ENCODE measurements at regions of chr7 and their contacts with region 1.

Region 1: GRCh38 chr7:97027427-97028234 is 3.0 kb upstream of the DLX5 start:
- DNase-seq: peak; percentile 49 to 83 (median 58)
- ATAC-seq: peak; percentile 71
- H3K4me3 ChIP-seq: peak overlapping the region; percentile 47
- H3K4me3 Mint-ChIP-seq: peak overlapping the region; percentile 85
- H3K27ac ChIP-seq: no peak overlapping the region
- H3K27ac Mint-ChIP-seq: no peak overlapping the region
- H3K4me1 ChIP-seq: peaks cover 33% of the 10 kb centered on the region
- H3K4me1 Mint-ChIP-seq: peaks cover 47% of the 10 kb centered on the region
- H3K27me3 ChIP-seq: peaks cover 49 to 65% of the 10 kb centered on the region in 2 experiments
- H3K27me3 Mint-ChIP-seq: peaks cover 89% of the 10 kb centered on the region
- CTCF ChIP-seq: peak; percentile 70

Region 2: DNA sequence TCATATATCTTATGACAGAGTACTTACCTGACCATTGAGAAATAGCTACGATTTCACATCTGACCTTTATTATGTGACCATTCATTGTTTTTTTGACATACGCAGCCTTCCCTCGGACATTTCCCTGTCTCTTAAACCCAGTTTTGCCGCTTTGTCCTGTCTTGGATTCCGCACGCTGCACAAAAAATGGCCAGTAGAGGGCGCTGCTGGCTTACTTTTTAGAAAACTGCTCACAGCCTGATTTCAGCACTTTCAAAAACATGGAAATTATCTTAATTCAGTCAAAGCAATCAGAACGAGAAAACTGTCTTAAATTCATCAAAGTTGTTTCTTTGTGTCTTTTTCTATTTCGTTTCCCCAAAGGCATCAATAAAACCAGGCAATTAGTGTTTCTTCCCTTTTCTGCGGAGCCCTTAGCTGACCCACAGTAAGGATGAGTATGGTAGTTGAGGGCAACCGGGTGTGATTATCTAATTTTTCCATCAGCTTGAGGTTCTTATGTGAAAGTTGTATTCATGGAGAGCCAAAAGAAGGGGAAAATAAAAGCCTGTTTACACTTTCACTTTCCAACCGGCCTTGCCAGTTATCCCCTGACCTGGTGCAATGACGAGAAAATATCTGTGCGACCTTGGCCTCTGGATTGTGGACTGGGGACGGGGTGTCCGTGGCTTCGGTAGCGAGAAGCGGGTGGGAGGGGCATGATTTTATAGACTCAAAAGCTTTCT is 1110.9 kb before region 1 on chr7:
- CTCF ChIA-PET with region 1: interaction called, 17 read pairs
- POLR2A ChIA-PET with region 1: no interaction called
- intact Hi-C with region 1: loop called (anchors 1 to 2 kb)
- DNase-seq: peak; percentile 50 to 79 (median 66)
- ATAC-seq: no peak
- H3K4me3 ChIP-seq: no peak overlapping the region
- H3K4me3 Mint-ChIP-seq: no peak overlapping the region
- H3K27ac ChIP-seq: no peak overlapping the region
- H3K27ac Mint-ChIP-seq: no peak overlapping the region
- H3K4me1 ChIP-seq: no peaks in the 10 kb centered on the region
- H3K4me1 Mint-ChIP-seq: no peaks in the 10 kb centered on the region
- H3K27me3 ChIP-seq: peaks cover 0 to 9% of the 10 kb centered on the region in 2 experiments
- H3K27me3 Mint-ChIP-seq: peaks cover 58% of the 10 kb centered on the region
- CTCF ChIP-seq: peak; percentile 92

Region 3: GRCh38 chr7:96075510-96076349 is 951.9 kb before region 1 on chr7:
- CTCF ChIA-PET with region 1: interaction called, 14 read pairs
- POLR2A ChIA-PET with region 1: interaction called, 4 read pairs
- intact Hi-C with region 1: loop called (anchors 1 kb)
- DNase-seq: peak; percentile 20 to 66 (median 28)
- ATAC-seq: peak; percentile 80
- H3K4me3 ChIP-seq: peak overlapping the region; percentile 41
- H3K4me3 Mint-ChIP-seq: peak overlapping the region; percentile 90
- H3K27ac ChIP-seq: no peak overlapping the region
- H3K27ac Mint-ChIP-seq: no peak overlapping the region
- H3K4me1 ChIP-seq: peaks cover 11% of the 10 kb centered on the region
- H3K4me1 Mint-ChIP-seq: peaks cover 8% of the 10 kb centered on the region
- H3K27me3 ChIP-seq: peaks cover 11 to 46% of the 10 kb centered on the region in 2 experiments
- H3K27me3 Mint-ChIP-seq: peaks cover 58% of the 10 kb centered on the region
- CTCF ChIP-seq: peak; percentile 72

Region 4: DNA sequence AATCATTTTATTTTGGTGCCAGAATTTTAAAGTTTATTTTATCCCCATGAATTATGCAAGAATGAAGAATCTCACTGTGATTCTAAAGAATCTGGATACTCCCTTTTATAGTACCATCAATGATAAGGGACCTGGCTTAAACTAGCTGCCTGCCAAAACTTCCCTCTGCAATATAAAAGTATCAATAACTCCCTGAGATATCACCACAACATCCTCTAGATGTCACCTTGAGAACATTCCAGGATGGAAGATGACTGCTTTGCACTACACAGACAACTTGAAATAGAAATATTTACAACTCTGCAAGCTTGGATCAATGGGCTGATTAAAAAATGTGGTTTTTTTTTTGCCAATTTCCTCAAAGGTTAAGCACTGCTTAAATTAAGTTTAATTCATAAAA is 847.8 kb before region 1 on chr7:
- CTCF ChIA-PET with region 1: no interaction called
- POLR2A ChIA-PET with region 1: no interaction called
- intact Hi-C with region 1: loop called (anchors 5 to 10 kb)
- DNase-seq: peak in 1 of 14 experiments; percentile 2
- ATAC-seq: no peak
- H3K4me3 ChIP-seq: no peak overlapping the region
- H3K4me3 Mint-ChIP-seq: no peak overlapping the region
- H3K27ac ChIP-seq: no peak overlapping the region
- H3K27ac Mint-ChIP-seq: no peak overlapping the region
- H3K4me1 ChIP-seq: no peaks in the 10 kb centered on the region
- H3K4me1 Mint-ChIP-seq: no peaks in the 10 kb centered on the region
- H3K27me3 ChIP-seq: no peaks in the 10 kb centered on the region
- H3K27me3 Mint-ChIP-seq: no peaks in the 10 kb centered on the region
- CTCF ChIP-seq: no peak

Region 5: DNA sequence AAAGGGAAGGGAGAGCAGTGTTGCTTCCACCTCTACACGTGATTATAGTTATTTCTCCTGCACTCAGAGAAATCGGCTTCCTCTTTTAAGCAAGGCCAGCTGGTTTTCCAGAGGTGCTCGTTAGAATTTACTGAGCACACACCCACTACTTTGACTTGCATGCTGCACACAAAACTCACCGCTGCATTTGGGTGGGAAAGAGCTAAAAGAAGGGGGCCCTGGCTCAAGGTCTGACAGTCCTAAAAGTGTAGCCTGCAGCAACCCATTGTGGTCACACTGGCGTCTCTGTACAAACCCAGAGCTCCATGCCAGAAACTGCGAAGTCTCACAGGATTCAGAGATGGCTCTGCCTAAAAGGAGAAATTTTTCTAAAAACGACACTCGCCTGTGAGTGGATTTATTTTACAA is 839.5 kb before region 1 on chr7:
- CTCF ChIA-PET with region 1: no interaction called
- POLR2A ChIA-PET with region 1: no interaction called
- intact Hi-C with region 1: loop called (anchors 5 to 10 kb)
- DNase-seq: no peak
- ATAC-seq: no peak
- H3K4me3 ChIP-seq: no peak overlapping the region
- H3K4me3 Mint-ChIP-seq: no peak overlapping the region
- H3K27ac ChIP-seq: no peak overlapping the region
- H3K27ac Mint-ChIP-seq: no peak overlapping the region
- H3K4me1 ChIP-seq: no peaks in the 10 kb centered on the region
- H3K4me1 Mint-ChIP-seq: peaks cover 8% of the 10 kb centered on the region
- H3K27me3 ChIP-seq: no peaks in the 10 kb centered on the region
- H3K27me3 Mint-ChIP-seq: no peaks in the 10 kb centered on the region
- CTCF ChIP-seq: no peak

Region 6: DNA sequence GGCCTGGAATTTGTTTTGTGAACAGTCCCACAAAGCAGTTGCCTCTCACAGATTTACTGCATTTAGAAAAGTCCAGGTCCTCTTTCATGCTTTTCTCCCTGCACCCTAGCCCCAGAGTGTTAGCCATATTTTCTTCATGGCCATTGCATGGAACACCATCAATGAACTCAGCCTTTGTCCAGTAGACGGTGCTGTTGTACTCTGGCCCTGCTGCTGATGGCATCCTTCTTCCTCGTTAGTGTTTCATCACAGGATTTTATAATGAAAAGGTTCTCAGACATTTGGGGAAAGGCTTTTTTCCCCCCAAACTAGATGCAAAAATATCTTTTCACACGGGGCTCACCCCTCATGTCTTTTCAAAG is 612.7 kb before region 1 on chr7:
- CTCF ChIA-PET with region 1: no interaction called
- POLR2A ChIA-PET with region 1: no interaction called
- intact Hi-C with region 1: loop called (anchors 5 to 10 kb)
- DNase-seq: peak in 9 of 14 experiments; percentile 3 to 62 (median 7)
- ATAC-seq: peak; percentile 43
- H3K4me3 ChIP-seq: no peak overlapping the region
- H3K4me3 Mint-ChIP-seq: no peak overlapping the region
- H3K27ac ChIP-seq: no peak overlapping the region
- H3K27ac Mint-ChIP-seq: no peak overlapping the region
- H3K4me1 ChIP-seq: no peaks in the 10 kb centered on the region
- H3K4me1 Mint-ChIP-seq: no peaks in the 10 kb centered on the region
- H3K27me3 ChIP-seq: no peaks in the 10 kb centered on the region
- H3K27me3 Mint-ChIP-seq: peaks cover 10% of the 10 kb centered on the region
- CTCF ChIP-seq: peak; percentile 46

Region 7: GRCh38 chr7:96548664-96549063 is 479.0 kb before region 1 on chr7:
- CTCF ChIA-PET with region 1: no interaction called
- POLR2A ChIA-PET with region 1: no interaction called
- intact Hi-C with region 1: no loop called
- DNase-seq: no peak
- ATAC-seq: no peak
- H3K4me3 ChIP-seq: no peak overlapping the region
- H3K4me3 Mint-ChIP-seq: no peak overlapping the region
- H3K27ac ChIP-seq: no peak overlapping the region
- H3K27ac Mint-ChIP-seq: no peak overlapping the region
- H3K4me1 ChIP-seq: no peaks in the 10 kb centered on the region
- H3K4me1 Mint-ChIP-seq: no peaks in the 10 kb centered on the region
- H3K27me3 ChIP-seq: no peaks in the 10 kb centered on the region
- H3K27me3 Mint-ChIP-seq: peaks cover 22% of the 10 kb centered on the region
- CTCF ChIP-seq: no peak

Measured in CD4-positive, alpha-beta T cell (primary cell).